ENCODE measurements at regions of chr1 and their contacts with region 1.

Region 1: DNA sequence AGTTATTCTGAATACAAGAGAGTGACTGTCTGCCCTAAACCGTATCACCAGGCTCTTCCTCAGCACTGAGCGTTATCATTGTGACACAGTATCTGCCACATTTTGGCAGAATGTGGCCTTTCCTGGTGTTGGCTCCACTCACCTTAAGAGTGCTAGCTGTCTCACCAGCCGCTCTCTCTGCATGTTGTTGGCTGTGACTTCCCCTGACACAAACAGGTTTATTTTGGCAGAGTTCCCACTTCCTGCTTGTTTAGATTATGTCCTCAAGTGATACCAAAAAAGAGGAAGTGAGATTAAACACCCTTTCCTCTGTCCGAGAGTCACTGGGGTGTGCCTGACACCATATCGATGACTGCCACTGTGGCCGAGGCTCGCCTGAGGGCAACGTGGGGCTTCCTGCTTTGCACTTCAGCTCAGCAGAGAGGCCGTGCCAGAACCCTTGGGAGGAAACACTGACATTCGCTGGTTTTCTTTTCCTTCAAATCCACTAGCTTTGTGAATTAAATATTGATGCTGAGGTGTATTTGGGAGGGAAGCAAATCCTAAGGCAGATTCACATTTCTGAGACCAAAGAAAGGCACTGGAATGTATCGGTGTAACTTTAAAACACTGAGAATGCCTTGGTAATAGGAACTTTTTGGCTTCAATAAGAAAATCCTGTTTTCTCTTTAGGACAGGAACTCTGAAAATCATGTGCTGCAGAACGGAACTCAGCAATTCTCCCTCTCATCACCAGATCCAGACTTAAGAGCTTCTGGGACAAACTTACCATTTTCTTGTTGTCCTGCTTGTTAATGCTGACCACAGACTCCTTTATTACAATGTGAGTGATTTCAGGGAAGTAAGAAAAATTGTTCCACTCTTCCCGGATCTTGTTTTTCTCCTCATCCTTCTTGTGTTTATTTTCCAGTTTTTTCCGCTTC is 102.1 kb downstream of the JAK1 start:
- DNase-seq: peak; percentile 44 to 54
- ATAC-seq: peak; percentile 48 to 51
- H3K4me3 ChIP-seq: no peak overlapping the region
- H3K27ac ChIP-seq: peak overlapping the region; percentile 35 to 69 (median 52)
- H3K4me1 ChIP-seq: peaks cover 6 to 11% of the 10 kb centered on the region in 2 donors
- H3K27me3 ChIP-seq: no peaks in the 10 kb centered on the region
- CTCF ChIP-seq: no peak
- POLR2A ChIP-seq: peak in 1 of 2 donors; percentile 14

Region 2: GRCh38 chr1:64711266-64711665 is 153.0 kb before region 1 on chr1:
- in situ Hi-C with region 1: no loop called
- intact Hi-C with region 1: no loop called
- DNase-seq: no peak
- ATAC-seq: no peak
- H3K4me3 ChIP-seq: no peak overlapping the region
- H3K27ac ChIP-seq: no peak overlapping the region
- H3K4me1 ChIP-seq: no peaks in the 10 kb centered on the region
- H3K27me3 ChIP-seq: no peaks in the 10 kb centered on the region
- CTCF ChIP-seq: no peak
- POLR2A ChIP-seq: no peak

Region 3: DNA sequence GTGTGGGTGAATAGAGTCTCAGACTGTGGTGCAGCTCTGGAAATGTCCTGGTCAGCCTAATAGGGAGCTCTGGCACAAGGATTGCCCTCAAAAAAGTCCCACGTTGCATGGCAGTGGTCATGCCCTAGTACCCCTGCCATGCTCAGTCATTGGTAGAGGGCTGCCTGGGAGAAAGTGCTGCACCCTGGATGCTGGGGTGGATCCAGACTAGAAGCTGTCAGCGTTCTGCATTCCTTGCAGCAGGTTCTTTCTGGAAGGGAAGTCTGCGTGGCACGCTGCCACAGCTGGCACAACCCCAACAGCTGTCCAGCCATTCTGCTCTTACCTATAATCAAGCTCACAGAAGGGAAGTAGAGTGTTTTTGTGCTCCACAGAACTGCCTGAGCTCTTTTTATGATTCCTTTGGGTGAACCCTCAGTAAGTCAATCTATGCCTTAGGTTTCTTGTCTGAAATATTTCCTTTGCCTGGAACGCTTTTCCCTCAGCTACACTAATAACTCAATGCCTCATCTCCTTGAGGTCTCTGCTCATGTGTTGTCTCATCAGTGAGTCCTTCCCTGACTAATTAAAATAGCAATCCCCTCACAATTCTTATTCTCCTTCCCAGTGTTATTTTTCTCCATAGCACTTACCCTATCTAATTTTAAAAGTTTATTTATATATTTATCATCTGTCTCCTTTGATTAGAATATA is 163.5 kb after region 1 on chr1:
- in situ Hi-C with region 1: loop called in 1 of 4 experiments (anchors 25 kb)
- intact Hi-C with region 1: no loop called
- DNase-seq: peak; percentile 32 to 72
- ATAC-seq: peak; percentile 47 to 68
- H3K4me3 ChIP-seq: no peak overlapping the region
- H3K27ac ChIP-seq: peak overlapping the region in 1 of 4 donors; percentile 29
- H3K4me1 ChIP-seq: peaks cover 19 to 27% of the 10 kb centered on the region in 2 donors
- H3K27me3 ChIP-seq: no peaks in the 10 kb centered on the region
- CTCF ChIP-seq: no peak
- POLR2A ChIP-seq: no peak

Region 4: DNA sequence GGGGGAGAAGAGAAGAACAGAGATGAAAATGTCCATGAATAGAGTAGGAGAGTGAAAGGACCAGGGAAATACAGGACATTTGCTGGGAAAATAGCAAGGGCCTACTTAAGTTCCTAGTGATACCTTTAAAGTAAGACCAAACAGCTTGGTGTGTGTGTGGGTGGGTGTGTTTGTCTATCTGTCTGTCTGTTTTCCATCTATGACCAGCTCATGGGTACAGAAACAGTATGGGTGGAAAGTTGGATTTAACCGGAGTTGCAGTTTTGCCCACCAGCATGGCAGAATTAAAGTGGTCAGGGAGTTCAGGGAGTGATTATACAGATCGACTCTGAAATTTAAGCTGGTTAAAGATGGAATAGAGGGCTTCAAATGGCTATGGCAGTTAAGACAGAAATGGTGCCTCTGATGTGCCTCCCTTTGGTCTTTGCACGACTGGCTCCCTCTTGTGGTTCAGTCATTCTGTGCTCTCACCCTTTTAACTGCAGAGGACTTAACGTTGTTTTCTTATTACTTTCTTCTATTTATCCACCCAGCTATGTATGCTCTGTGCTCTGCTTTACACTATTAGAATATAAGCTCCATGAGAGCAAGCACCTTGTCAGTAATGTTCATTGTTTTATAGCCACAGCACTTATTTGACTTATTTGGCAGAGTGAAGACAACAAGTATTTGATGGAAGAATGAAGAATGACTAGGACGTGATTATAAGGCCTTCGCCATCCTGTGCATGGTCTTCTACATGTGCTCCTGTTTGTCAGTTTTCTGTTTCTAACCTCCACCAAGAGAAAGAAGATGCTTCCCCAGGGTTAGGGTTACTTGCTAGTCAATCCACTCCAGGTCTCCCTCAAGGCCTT is 211.1 kb after region 1 on chr1:
- in situ Hi-C with region 1: loop called in 3 of 4 experiments (anchors 10 to 25 kb)
- intact Hi-C with region 1: no loop called
- DNase-seq: peak; percentile 32 to 49
- ATAC-seq: peak; percentile 89 to 95
- H3K4me3 ChIP-seq: no peak overlapping the region
- H3K27ac ChIP-seq: no peak overlapping the region
- H3K4me1 ChIP-seq: no peaks in the 10 kb centered on the region
- H3K27me3 ChIP-seq: no peaks in the 10 kb centered on the region
- CTCF ChIP-seq: peak; percentile 70 to 84 (median 76)
- POLR2A ChIP-seq: no peak

Region 5: GRCh38 chr1:65209005-65209885 is 345.0 kb after region 1 on chr1:
- in situ Hi-C with region 1: loop called in 1 of 4 experiments (anchors 25 kb)
- intact Hi-C with region 1: no loop called
- DNase-seq: peak in 1 of 2 donors; percentile 6
- ATAC-seq: peak; percentile 14 to 52
- H3K4me3 ChIP-seq: no peak overlapping the region
- H3K27ac ChIP-seq: no peak overlapping the region
- H3K4me1 ChIP-seq: no peaks in the 10 kb centered on the region
- H3K27me3 ChIP-seq: no peaks in the 10 kb centered on the region
- CTCF ChIP-seq: peak in 3 of 5 experiments; percentile 22 to 65 (median 53)
- POLR2A ChIP-seq: no peak

Region 6: DNA sequence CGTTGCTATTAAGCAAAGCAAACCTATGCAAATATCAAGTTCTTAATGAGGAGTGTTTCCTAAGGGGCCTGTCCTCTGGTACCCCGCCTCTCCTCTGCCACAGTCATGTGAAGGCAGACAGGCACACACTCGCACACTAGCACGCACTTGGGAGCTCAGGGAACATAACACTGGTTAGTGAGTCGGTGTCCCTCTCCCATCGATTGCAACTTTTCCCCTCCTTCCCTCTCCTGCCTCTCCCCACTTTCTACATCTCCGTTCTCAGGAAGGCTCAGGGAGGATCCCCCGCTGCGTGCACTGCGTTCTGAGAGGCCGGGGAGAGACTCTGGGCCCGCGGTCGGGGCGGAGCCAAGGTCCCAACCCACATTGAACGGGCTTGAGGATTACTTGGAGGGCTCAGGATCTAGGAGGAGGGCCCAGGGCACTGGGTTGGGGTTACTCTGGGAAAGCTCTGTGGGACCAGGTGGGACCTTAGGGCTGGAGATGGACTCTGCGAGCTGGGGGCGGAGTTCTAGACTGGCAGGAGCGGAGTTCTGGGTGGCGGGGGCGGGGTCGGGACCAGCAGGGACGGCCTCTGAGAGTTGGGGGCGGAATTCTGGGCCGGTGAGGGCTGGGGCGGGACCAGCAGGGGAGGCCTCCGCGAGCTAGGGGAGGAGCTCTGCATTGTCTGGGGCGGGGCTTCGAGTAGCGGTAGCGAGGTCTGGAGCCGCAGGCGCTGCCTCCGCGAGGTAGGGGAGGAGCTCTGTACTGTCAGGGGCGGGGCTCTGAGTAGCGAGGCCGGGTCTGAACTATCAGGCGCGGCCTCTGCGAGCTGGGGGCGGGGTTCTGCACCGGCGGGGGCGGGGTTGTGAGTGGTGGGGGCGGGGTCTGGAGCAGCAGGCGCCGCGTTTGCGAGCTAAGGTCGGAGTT is 555.7 kb after region 1 on chr1:
- in situ Hi-C with region 1: loop called in 1 of 4 experiments (anchors 25 kb)
- intact Hi-C with region 1: no loop called
- DNase-seq: peak; percentile 98
- ATAC-seq: peak; percentile 84 to 85
- H3K4me3 ChIP-seq: peak overlapping the region; percentile 58 to 86 (median 72)
- H3K27ac ChIP-seq: peak overlapping the region; percentile 94 to 97 (median 96)
- H3K4me1 ChIP-seq: peaks cover 22 to 30% of the 10 kb centered on the region in 2 donors
- H3K27me3 ChIP-seq: no peaks in the 10 kb centered on the region
- CTCF ChIP-seq: no peak
- POLR2A ChIP-seq: peak; percentile 22 to 26

Region 7: DNA sequence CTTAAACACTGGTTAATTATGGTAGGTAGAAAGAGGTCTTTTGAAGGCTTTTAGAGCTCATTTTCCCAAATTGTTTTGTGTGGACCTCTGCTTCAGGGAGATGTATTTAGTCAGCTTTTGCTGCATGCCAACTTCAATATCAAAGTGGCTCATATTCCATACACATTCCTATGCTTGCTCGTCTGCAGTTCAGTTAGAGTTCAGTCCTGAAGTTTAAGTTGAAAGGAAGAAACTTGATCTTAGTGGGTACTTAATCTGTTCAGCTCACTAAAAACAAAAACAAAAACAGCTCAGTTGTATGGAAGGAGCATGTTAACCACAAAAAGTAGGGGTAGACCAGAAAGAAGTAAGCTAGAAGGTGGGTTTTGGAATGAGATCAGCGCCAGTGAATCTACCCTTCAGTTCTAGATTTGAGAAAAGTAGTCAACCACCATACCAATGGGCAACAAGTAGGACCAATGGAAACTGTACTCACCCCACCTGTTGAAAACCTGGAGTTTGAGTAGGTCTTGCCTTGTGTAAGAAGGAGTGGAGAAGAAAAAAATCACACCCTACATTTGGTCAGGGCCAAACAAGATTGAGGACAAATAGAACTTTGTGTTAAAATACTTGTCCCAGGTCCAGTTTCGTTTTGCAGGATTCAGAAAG is 614.2 kb after region 1 on chr1:
- in situ Hi-C with region 1: no loop called
- intact Hi-C with region 1: no loop called
- DNase-seq: no peak
- ATAC-seq: no peak
- H3K4me3 ChIP-seq: no peak overlapping the region
- H3K27ac ChIP-seq: no peak overlapping the region
- H3K4me1 ChIP-seq: peaks cover 0 to 5% of the 10 kb centered on the region in 2 donors
- H3K27me3 ChIP-seq: no peaks in the 10 kb centered on the region
- CTCF ChIP-seq: no peak
- POLR2A ChIP-seq: no peak

Measured in gastrocnemius medialis (tissue), 4 donors.